Activated T-helper 1 cell treated with anti-CD3 and anti-CD28 coated beads, Interleukin-12 subunit alpha, Interleukin-12 subunit beta, Interleukin-2, Interleukin-4 antibody, amounts not matched to agents 30 ng/mL and 10 ng/mL and 1 ng/mL, durations not matched to agents 14 hours and 24 hours and 36 hours (primary cell): ENCODE measurements at regions of chr7 and their contacts with region 1.

Region 1: GRCh38 chr7:1240517-1241257 is 8.0 kb downstream of the UNCX start:
- DNase-seq: no peak
- H3K4me3 Mint-ChIP-seq: no peak overlapping the region
- H3K27ac Mint-ChIP-seq: peak overlapping the region; percentile 52
- H3K4me1 Mint-ChIP-seq: no peaks in the 10 kb centered on the region
- H3K27me3 Mint-ChIP-seq: peaks cover 55% of the 10 kb centered on the region

Region 2: GRCh38 chr7:1225441-1226185 is 15.1 kb before region 1 on chr7:
- intact Hi-C with region 1: loop called (anchors 2 kb)
- DNase-seq: peak; percentile 13
- H3K4me3 Mint-ChIP-seq: no peak overlapping the region
- H3K27ac Mint-ChIP-seq: peak overlapping the region; percentile 70
- H3K4me1 Mint-ChIP-seq: no peaks in the 10 kb centered on the region
- H3K27me3 Mint-ChIP-seq: peaks cover 54% of the 10 kb centered on the region